MCF 10A (cell line): ENCODE measurements at regions of chr1 and their contacts with region 1.

Region 1: DNA sequence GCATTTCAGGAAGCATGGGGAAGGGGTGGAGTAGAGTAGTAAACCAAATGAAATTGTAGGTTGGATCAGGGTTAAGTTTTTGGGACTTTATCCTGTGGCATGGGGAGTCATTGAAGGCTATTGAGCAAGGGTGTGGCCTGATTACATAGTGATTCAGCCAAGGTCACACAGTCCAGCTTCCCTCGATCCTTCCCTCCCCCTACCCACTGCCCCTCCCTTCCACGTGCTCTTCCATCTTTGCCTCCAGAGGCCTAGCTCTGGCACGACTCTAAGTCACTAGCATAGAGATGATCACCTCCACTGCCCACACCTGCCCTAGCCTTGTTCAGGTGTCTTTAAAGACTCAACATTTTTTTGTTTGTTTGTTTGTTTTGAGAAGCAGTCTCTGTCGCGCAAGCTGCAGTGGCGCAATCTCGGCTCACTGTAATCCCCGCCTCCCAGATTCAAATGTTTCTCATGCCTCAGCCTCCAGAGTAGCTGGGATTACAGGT is 37.2 kb upstream of the SLC9A1 start:
- DNase-seq: peak; percentile 58
- H3K4me3 Mint-ChIP-seq: peak overlapping the region; percentile 5
- H3K27ac Mint-ChIP-seq: peak overlapping the region; percentile 43
- H3K4me1 Mint-ChIP-seq: peaks cover 15% of the 10 kb centered on the region
- H3K27me3 Mint-ChIP-seq: no peaks in the 10 kb centered on the region
- CTCF ChIP-seq: no peak

Region 2: GRCh38 chr1:27057801-27058625 is 134.1 kb before region 1 on chr1:
- CTCF ChIA-PET with region 1: no interaction called
- POLR2A ChIA-PET with region 1: no interaction called
- intact Hi-C with region 1: no loop called
- DNase-seq: no peak
- H3K4me3 Mint-ChIP-seq: no peak overlapping the region
- H3K27ac Mint-ChIP-seq: no peak overlapping the region
- H3K4me1 Mint-ChIP-seq: no peaks in the 10 kb centered on the region
- H3K27me3 Mint-ChIP-seq: no peaks in the 10 kb centered on the region
- CTCF ChIP-seq: no peak

Region 3: DNA sequence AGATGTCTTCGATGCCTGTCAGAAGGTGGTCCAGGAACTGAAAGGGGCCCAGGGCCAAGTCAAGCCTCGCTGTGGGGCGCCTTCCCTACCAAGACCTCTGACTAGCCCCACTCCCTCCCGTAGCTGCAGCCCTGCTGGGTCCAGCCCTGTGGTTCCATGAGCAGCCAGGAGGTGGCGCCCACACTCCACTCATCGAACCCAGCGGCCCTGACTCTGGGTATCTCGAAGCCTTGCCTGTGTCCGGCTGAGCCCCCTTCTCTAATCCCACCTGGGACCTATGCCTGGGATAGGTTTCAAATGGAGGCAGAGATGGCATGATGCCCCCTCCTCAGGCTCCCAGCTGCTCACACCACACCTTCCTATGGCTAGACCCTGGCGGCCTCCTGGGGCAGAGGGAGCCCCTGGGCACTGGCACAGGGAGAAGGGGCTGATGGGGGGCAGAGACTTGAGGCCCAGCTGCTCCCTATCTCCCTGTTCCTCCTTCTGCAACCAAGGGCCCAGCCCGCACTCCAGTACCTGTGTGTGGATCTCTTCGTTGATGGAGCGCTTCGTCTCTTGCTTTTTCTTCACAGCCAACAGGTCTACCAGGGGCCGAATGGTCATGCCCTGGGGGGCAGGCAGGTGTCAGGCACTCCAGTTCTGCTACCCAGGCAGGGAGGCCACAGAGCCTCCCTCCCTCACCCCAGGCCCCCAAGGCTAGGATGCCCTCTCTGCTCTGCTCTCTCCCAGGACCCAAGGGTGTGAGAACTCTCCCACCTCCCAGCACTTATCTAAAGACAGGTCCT is 89.2 kb before region 1 on chr1:
- CTCF ChIA-PET with region 1: interaction called, 26 read pairs
- POLR2A ChIA-PET with region 1: interaction called, 3 read pairs
- intact Hi-C with region 1: no loop called
- DNase-seq: peak; percentile 72
- H3K4me3 Mint-ChIP-seq: no peak overlapping the region
- H3K27ac Mint-ChIP-seq: no peak overlapping the region
- H3K4me1 Mint-ChIP-seq: peaks cover 19% of the 10 kb centered on the region
- H3K27me3 Mint-ChIP-seq: no peaks in the 10 kb centered on the region
- CTCF ChIP-seq: peak; percentile 95

Region 4: GRCh38 chr1:27166351-27166802 is 25.7 kb before region 1 on chr1:
- CTCF ChIA-PET with region 1: no interaction called
- POLR2A ChIA-PET with region 1: no interaction called
- intact Hi-C with region 1: no loop called
- DNase-seq: no peak
- H3K4me3 Mint-ChIP-seq: no peak overlapping the region
- H3K27ac Mint-ChIP-seq: no peak overlapping the region
- H3K4me1 Mint-ChIP-seq: no peaks in the 10 kb centered on the region
- H3K27me3 Mint-ChIP-seq: no peaks in the 10 kb centered on the region
- CTCF ChIP-seq: no peak

Region 5: GRCh38 chr1:27267153-27267552 is 75.1 kb after region 1 on chr1:
- CTCF ChIA-PET with region 1: interaction called, 15 read pairs
- POLR2A ChIA-PET with region 1: no interaction called
- intact Hi-C with region 1: no loop called
- DNase-seq: no peak
- H3K4me3 Mint-ChIP-seq: no peak overlapping the region
- H3K27ac Mint-ChIP-seq: no peak overlapping the region
- H3K4me1 Mint-ChIP-seq: no peaks in the 10 kb centered on the region
- H3K27me3 Mint-ChIP-seq: no peaks in the 10 kb centered on the region
- CTCF ChIP-seq: no peak

Region 6: GRCh38 chr1:27436204-27437159 is 244.4 kb after region 1 on chr1:
- CTCF ChIA-PET with region 1: no interaction called
- POLR2A ChIA-PET with region 1: no interaction called
- intact Hi-C with region 1: no loop called
- DNase-seq: peak; percentile 66
- H3K4me3 Mint-ChIP-seq: peak overlapping the region; percentile 6
- H3K27ac Mint-ChIP-seq: no peak overlapping the region
- H3K4me1 Mint-ChIP-seq: peaks cover 32% of the 10 kb centered on the region
- H3K27me3 Mint-ChIP-seq: no peaks in the 10 kb centered on the region
- CTCF ChIP-seq: no peak